Activated naive CD4-positive, alpha-beta T cell treated with anti-CD3 and anti-CD28 coated beads for 36 hours (primary cell): ENCODE measurements at regions of chrX and their contacts with region 1.

Region 1: GRCh38 chrX:76253432-76253831 is 80.6 kb downstream of the PBDC1 start:
- DNase-seq: peak; percentile 56
- H3K4me3 Mint-ChIP-seq: no peak overlapping the region
- H3K27ac Mint-ChIP-seq: no peak overlapping the region
- H3K4me1 Mint-ChIP-seq: no peaks in the 10 kb centered on the region
- H3K27me3 Mint-ChIP-seq: no peaks in the 10 kb centered on the region

Region 2: DNA sequence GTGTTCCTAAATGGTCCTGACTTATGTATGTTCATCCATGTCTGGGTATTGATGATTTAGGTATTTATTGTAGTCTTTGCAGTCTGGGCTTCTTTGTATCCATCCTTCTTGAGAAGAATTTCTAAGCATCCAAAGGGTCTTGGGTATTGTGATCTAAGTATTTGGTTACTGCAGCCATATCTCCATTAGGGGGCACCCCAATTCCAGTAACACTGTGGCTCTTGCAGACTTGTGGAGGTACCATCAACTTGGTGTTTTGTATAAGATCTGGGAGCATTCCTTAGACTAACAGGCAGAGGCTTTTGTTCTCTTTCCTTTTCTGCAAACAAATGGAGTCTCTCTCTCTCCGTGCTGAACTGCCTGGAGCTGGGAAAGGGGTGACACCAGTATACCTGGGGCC is 1214.5 kb before region 1 on chrX:
- CTCF ChIA-PET with region 1: no interaction called
- intact Hi-C with region 1: loop called (anchors 2 kb)
- DNase-seq: peak; percentile 29
- H3K4me3 Mint-ChIP-seq: no peak overlapping the region
- H3K27ac Mint-ChIP-seq: no peak overlapping the region
- H3K4me1 Mint-ChIP-seq: no peaks in the 10 kb centered on the region
- H3K27me3 Mint-ChIP-seq: no peaks in the 10 kb centered on the region

Region 3: DNA sequence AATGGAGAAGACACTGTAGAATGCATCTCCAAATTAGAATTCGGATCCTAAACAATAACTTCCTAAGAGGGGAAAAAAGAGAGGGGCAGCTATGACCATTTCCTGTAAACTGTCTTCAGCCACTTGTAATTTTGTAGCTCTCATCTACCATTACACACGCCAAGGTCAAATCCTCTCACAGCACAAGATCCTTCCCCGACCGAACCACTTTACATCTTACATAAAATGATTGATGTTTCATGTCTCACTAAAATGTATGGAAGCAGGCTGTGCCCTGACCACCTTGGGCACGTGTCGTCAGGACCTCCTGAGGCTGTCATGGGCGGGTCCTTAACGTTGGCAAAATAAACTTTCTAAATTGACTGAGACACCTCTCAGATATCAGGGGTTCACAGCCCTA is 104.7 kb before region 1 on chrX:
- CTCF ChIA-PET with region 1: interaction called, 9 read pairs
- intact Hi-C with region 1: loop called (anchors 5 kb)
- DNase-seq: peak; percentile 59
- H3K4me3 Mint-ChIP-seq: peak overlapping the region; percentile 80
- H3K27ac Mint-ChIP-seq: peak overlapping the region; percentile 98
- H3K4me1 Mint-ChIP-seq: peaks cover 9% of the 10 kb centered on the region
- H3K27me3 Mint-ChIP-seq: no peaks in the 10 kb centered on the region

Region 4: GRCh38 chrX:76202471-76202870 is 51.0 kb before region 1 on chrX:
- CTCF ChIA-PET with region 1: no interaction called
- intact Hi-C with region 1: no loop called
- DNase-seq: no peak
- H3K4me3 Mint-ChIP-seq: no peak overlapping the region
- H3K27ac Mint-ChIP-seq: no peak overlapping the region
- H3K4me1 Mint-ChIP-seq: peaks cover 4% of the 10 kb centered on the region
- H3K27me3 Mint-ChIP-seq: no peaks in the 10 kb centered on the region